Breast epithelium (tissue), 4 donors: ENCODE measurements at regions of chr17 and their contacts with region 1.

Region 1: DNA sequence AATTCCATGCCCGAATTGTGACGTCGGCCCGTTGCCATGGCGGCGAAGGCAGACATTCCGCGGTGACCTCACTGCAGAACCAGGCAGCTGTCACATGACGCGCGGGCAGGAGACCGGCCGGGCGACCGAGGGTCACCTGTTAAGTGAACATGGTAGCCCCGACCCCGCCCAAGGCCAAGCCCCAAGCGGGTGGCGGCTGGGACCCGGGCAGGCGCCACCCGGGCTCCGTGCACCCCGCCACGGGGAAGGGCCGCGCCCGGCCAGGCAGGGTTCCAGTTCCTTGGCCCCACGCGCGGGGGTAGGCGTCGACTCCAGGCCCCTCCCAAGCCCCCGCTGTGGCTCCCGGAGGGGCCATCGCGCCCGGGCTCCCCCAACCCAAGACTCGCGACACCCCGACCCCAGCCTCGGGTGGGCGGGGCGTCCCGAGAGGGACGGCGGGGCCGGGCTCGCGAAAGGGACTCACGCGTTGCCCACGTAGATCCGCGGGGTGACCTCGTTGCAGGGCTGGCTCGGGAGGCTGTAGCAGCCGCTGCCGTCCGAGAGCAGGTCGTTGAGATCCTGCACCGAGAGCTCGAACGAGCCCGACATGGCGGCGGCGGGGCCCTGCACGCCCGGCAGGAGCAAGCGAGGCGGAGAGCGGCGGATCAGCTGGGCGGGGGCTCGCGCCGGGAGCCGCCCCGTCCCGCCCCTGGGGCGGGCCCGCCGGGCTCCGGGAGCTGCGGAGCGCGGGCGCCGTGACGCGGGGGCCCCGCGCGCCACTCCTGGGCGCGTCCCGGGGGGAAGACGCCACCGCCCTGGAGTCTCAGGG is at the start of gene DUSP3:
- DNase-seq: peak; percentile 97
- H3K4me3 ChIP-seq: peak within 1 kb of the TSS; percentile 78 to 97 (median 95)
- H3K27ac ChIP-seq: peak within 1 kb of the TSS; percentile 99 to 100
- H3K4me1 ChIP-seq: no peaks in the 10 kb centered on the region
- H3K27me3 ChIP-seq: no peaks in the 10 kb centered on the region
- CTCF ChIP-seq: no peak
- POLR2A ChIP-seq: no peak
- total RNA-seq, gene DUSP3: 51.5 to 74.9 (median 62.6) TPM

Region 2: DNA sequence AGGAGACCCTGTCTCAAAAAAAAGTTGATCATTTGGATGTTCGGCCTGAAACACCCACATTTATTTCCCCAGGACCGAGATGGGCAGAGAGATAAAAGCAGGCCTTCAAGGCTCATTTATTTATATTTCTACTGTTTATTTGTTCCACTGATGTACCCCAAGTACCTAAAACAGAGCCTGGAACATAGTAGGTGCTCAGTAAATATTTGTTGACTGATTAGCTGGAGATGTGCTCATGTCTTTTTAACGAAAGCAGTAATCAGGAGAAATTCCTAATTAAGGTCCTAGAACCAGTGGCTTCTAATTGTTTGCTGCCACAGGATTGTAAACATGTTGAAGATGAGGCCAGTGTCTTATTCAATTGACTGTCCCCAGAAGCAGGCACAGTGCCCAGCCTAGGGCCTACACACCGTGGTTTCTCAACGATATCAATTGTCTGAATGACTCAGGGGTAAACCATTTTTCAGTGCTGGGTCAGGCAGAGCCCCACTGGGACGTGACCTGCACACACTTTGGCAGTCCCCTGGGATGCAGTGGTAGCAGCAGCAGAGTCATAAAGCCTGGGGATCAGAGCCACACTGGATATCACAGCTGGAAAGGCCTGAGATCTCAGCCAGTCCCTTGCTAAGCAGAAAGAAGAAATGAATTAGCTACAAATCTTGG is 54.7 kb before region 1 on chr17:
- intact Hi-C with region 1: no loop called
- DNase-seq: no peak
- H3K4me3 ChIP-seq: no peak overlapping the region
- H3K27ac ChIP-seq: no peak overlapping the region
- H3K4me1 ChIP-seq: no peaks in the 10 kb centered on the region
- H3K27me3 ChIP-seq: no peaks in the 10 kb centered on the region
- CTCF ChIP-seq: no peak
- POLR2A ChIP-seq: no peak

Region 3: DNA sequence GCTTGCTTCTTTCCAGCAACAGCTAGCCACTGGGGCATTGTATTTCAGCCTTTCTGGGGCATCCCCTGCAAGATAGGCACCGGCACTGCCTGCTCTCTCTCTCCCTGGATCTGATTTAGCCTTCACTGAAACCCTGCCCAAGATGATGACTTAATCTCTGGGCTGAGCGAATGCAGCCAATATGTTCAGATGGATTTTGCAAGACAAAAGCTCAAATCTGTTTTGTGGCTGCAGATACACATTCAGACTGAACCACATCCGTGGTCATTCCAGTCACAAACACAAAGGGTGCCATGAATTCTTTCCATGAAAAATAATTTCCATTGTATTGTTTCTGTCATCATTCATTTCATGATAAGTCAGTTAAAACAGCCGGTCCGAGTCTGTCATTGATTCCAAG is 44.2 kb before region 1 on chr17:
- intact Hi-C with region 1: no loop called
- DNase-seq: no peak
- H3K4me3 ChIP-seq: no peak overlapping the region
- H3K27ac ChIP-seq: no peak overlapping the region
- H3K4me1 ChIP-seq: no peaks in the 10 kb centered on the region
- H3K27me3 ChIP-seq: no peaks in the 10 kb centered on the region
- CTCF ChIP-seq: no peak
- POLR2A ChIP-seq: no peak

Region 4: DNA sequence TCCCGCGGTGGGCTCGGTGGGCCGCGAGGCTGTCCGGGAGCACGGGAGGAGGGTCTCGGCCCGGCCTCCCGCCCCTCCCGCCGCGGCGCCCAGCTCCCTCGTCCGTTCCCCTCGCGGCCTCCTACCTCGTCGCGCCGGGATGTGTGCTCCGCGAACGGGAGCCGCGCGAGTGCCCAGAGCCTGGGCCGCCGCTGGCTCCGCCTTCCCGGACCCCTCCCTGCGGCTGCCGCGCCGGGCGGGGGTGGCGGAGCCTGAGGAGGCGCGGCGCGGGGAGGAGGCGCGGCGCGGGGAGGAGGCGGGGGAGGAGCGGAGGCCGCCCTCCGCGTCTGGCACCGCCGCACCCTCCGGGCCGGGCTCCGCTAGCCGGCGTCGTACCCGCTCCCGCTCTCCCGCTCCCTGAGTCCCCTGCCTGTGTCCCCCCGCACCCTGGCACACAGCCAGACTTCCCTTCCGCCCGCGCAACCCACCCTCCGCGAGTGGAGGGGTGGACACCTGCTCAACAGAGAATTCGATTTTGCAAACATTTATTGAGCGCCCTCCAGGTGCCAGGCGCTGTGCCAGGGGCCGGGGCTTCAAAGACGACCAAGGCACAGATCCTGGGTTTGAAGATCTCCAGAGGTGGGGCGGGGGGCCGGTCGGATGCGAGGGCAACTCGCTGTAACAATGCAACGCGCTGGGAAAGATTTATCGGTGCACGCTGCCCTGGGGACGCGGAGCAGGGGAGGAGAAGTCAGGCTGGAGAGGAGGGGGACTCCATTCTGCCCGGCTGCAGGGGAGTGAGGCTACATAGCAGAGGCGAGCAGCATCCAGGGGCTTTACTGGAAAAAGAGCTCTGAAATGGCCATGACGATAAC is 54.7 kb after region 1 on chr17 and contains the start of gene MPP3:
- intact Hi-C with region 1: loop called (anchors 10 kb)
- DNase-seq: peak; percentile 50 to 61
- H3K4me3 ChIP-seq: peak within 1 kb of the TSS; percentile 64 to 90 (median 88)
- H3K27ac ChIP-seq: peak within 1 kb of the TSS; percentile 80 to 90
- H3K4me1 ChIP-seq: peaks cover 0 to 7% of the 10 kb centered on the region in 2 donors
- H3K27me3 ChIP-seq: no peaks in the 10 kb centered on the region
- CTCF ChIP-seq: no peak
- POLR2A ChIP-seq: no peak
- total RNA-seq, gene MPP3: 24.2 to 26.3 (median 26.2) TPM